SK-N-SH (cell line): ENCODE measurements at regions of chr17 and their contacts with region 1.

Region 1: DNA sequence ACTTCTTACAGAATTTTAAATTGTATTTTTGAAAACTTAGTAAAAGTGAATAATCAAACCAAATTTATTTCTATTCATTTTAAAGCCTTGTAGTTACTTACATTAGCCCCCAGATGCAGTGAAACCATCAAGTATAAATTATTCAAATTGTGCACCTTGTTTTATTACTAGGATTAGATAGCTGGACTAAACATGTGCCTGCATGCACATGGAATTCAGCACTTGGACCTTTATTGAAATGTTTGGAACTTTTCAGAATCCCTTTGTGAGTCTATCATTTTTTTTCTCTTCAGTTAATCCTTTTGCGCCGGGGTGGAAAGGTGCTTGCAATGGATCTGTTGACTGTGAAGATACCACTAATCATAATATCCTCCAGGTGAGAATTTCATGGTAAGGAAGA is 4.7 kb downstream of the ZPBP2 start:
- DNase-seq: no peak
- H3K4me3 ChIP-seq: no peak overlapping the region
- H3K27ac ChIP-seq: no peak overlapping the region
- H3K4me1 ChIP-seq: no peaks in the 10 kb centered on the region
- H3K27me3 ChIP-seq: peaks cover 40% of the 10 kb centered on the region
- CTCF ChIP-seq: peak; percentile 72
- EP300 ChIP-seq: no peak
- RAD21 ChIP-seq: peak; percentile 58

Region 2: GRCh38 chr17:39894681-39895376 is 22.1 kb after region 1 on chr17:
- CTCF ChIA-PET with region 1: interaction called, 11 read pairs
- POLR2A ChIA-PET with region 1: no interaction called
- DNase-seq: no peak
- H3K4me3 ChIP-seq: no peak overlapping the region
- H3K27ac ChIP-seq: no peak overlapping the region
- H3K4me1 ChIP-seq: no peaks in the 10 kb centered on the region
- H3K27me3 ChIP-seq: peaks cover 46% of the 10 kb centered on the region; the same call in 1 of the 2 replicates
- CTCF ChIP-seq: no peak
- EP300 ChIP-seq: no peak
- RAD21 ChIP-seq: no peak

Region 3: DNA sequence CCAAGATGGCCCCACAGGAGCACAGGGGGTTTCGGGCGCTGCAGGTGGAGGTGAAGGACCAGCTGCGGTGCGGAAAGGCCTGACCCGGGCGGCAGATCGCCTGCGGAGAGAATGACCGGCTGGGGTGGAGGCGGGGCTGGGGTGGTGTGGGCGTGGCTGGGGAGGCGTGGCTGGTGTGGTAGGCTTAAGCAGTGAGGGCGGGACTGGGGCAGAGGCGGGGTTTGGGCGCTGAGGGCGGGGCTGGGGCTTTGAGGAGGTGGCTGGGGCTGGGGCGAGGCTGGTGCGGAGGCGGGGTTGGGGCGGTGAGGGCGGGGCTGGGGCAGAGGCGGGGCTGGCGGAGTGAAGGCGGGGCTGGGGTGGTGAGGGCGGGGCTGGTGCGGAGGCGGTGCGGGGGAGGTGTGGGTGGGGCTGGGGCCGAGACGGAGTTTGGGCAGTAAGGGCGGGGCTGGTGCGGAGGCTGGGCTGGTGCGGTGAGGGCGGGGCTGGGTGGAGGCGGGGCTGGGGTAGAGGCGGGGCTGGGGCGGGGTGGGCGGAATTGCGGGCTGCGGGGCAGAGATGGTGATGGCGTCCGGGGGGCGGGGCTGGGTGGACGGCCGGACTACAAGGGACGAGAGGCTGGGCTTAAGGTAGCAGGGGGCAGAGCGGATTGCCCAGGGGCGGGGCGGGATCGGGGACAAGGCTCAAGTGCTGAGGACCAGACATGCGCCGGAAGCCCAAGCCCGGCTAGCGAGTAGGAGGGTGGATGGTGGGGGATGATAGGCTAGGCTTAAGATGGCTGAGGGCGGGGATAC is 80.1 kb after region 1 on chr17:
- CTCF ChIA-PET with region 1: interaction called, 10 read pairs
- POLR2A ChIA-PET with region 1: no interaction called
- DNase-seq: peak; percentile 98
- H3K4me3 ChIP-seq: peak overlapping the region; percentile 41 to 50
- H3K27ac ChIP-seq: peak overlapping the region in 1 of 2 experiments; percentile 70; a peak in 1 of 4 replicates
- H3K4me1 ChIP-seq: peaks cover 0 to 11% of the 10 kb centered on the region in 2 experiments; a peak in 1 of 4 replicates
- H3K27me3 ChIP-seq: no peaks in the 10 kb centered on the region
- CTCF ChIP-seq: no peak
- EP300 ChIP-seq: no peak
- RAD21 ChIP-seq: no peak